ENCODE measurements at regions of chr17 and their contacts with region 1.

Region 1: GRCh38 chr17:19867064-19867313 is 747 bp downstream of the ULK2 start:
- DNase-seq: peak; percentile 66 to 84 (median 72)
- H3K4me3 ChIP-seq: peak overlapping the region; percentile 70 to 98 (median 88)
- H3K27ac ChIP-seq: peak overlapping the region; percentile 7 to 98 (median 92)
- H3K27me3 ChIP-seq: no peaks in the 10 kb centered on the region
- CTCF ChIP-seq: peak in 48 of 56 donors; percentile 17 to 59 (median 41)

Region 2: DNA sequence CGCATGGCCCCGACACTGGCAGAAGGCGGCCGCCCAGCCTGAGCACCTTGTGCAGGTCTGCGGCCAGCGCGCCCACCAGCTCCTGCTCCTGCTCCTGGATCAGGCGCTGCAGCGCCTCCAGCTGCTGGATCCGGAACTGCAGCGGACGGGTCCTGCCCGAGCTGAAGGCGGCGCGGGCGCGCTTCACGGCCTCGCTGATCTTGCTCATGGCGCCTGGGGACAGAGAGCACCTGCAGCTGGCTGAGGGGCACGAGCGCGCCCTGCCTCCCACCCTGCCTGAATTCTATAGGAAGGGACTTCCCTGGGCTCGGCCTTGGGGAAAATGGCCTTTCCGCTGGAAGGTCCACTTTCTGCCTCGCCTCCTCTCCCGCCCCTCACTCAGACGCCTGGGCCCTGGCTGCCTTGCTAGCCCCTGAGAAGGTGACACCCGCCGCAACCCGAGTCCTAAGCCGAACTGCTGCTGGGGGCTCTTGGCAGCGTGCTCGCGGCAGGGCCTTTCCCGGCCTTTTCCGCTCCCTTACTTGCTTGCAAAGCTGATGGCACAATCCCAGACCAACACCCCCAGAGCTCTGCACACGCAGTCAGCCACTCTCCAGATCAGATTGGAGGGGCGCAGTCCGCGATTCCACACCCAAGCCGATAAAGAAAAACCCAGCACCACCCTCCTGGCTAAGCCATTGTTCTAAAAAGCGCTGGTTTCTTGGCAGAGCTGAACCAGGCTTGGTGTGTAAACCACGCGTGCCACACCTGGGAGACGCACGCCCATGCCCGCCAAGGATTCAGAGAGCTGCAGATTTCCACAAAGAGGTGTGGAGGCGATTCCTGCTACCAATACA is 121.8 kb before region 1 on chr17:
- intact Hi-C with region 1: no loop called
- DNase-seq: peak; percentile 90 to 97 (median 94)
- H3K4me3 ChIP-seq: peak overlapping the region; percentile 45 to 76 (median 61)
- H3K27ac ChIP-seq: peak overlapping the region in 51 of 59 donors; percentile 7 to 84 (median 62)
- H3K27me3 ChIP-seq: no peaks in the 10 kb centered on the region
- CTCF ChIP-seq: peak; percentile 73 to 97 (median 92)

Region 3: DNA sequence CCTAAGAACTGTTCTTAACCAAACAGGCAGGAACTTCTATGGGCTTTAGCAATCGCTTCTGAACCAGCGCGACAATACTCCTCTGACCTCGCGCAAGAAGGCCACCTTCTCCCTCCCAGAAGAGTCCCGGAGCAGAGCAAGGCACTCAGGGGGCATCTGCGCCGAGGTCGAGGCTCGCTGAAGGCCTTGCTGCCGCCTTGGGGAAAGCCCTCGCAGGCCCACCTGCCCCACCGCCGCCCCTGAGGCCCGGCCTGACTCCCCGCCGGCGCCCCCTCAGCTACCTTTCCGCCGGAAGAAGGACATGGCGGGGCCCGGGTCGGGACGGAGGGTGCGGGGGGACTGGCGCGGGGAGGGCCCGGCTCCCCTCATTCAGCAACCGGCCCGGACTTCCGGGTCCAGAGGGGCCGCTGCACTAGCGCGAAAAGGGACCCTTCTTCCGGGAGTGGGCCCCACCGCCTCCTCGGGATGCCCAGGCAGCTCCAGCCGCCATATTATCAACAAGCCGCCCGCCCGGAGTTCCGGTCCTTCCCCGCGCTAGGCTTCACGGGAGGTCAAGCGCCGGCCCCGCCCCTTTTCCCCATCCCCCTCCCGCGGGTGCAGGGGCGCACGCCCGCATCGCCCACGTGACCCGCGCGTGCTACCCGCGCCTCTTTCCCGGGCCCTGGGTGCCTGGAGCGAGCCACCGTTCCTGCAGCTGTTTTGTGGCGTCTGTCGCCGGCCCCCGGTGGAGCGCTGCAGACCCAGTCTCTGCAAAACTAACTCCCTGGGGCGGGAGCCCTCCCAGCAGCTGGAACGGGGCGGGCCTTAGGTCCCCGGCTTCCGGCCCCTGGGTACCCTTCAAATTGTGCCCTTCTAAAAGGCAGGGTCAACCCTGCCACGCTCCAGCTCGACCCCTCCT is 110.6 kb after region 1 on chr17 and contains the start of gene AKAP10:
- intact Hi-C with region 1: loop called (anchors 2 to 5 kb)
- DNase-seq: peak; percentile 90 to 95 (median 92)
- H3K4me3 ChIP-seq: peak within 1 kb of the TSS; percentile 70 to 100 (median 97)
- H3K27ac ChIP-seq: peak within 1 kb of the TSS; percentile 90 to 100 (median 98)
- H3K27me3 ChIP-seq: no peaks in the 10 kb centered on the region
- CTCF ChIP-seq: peak in 41 of 56 donors; percentile 8 to 58 (median 25)
- total RNA-seq, gene AKAP10: 47.3 to 84.2 (median 63.2) TPM

Region 4: GRCh38 chr17:19991252-19991885 is 124.4 kb after region 1 on chr17:
- intact Hi-C with region 1: no loop called
- DNase-seq: no peak
- H3K4me3 ChIP-seq: no peak overlapping the region
- H3K27ac ChIP-seq: peak overlapping the region in 50 of 59 donors; percentile 6 to 85 (median 66)
- H3K27me3 ChIP-seq: no peaks in the 10 kb centered on the region
- CTCF ChIP-seq: no peak